ENCODE measurements at regions of chr1 and their contacts with region 1.

Region 1: DNA sequence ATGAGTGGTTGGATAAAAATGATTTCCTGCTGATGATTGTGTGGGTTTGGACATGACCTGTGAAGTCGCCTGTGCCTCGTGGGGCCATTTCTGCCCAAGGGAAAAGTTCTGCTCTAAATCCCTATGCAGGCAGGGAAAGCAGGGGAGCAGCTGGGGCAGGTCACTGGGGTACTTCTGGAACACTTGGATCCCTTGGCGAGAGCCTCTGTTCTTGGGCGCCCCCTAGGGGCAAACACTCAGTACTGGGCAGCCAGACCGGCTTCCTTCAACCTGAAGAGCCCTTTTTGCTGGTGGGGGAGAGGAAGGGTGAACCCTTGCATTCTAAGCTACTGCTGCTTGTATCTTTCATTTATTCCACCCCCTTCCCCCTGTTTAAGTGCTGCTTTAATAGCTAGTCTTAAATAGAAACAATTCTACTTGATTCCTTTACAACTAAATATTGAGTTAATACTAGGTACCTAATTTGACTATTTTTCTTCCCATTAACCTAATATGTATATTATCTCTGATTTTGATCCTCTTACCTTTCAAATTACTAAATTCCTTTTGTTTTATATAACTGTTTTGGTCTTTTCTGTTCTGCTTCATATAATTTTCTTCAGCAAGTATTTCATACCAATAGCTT is 5.1 kb upstream of the CLEC20A start:
- DNase-seq: peak; percentile 56 to 96
- H3K4me3 ChIP-seq: no peak overlapping the region
- H3K27ac ChIP-seq: no peak overlapping the region
- H3K4me1 ChIP-seq: no peaks in the 10 kb centered on the region; a peak in 1 of 7 replicates
- H3K27me3 ChIP-seq: no peaks in the 10 kb centered on the region
- CTCF ChIP-seq: peak; percentile 84 to 95 (median 87)
- EP300 ChIP-seq: no peak
- POLR2A ChIP-seq: no peak
- RAD21 ChIP-seq: peak; percentile 70 to 79

Region 2: GRCh38 chr1:178282949-178283367 is 218.9 kb before region 1 on chr1:
- CTCF ChIA-PET with region 1: interaction called, 12 read pairs
- POLR2A ChIA-PET with region 1: no interaction called
- DNase-seq: no peak
- H3K4me3 ChIP-seq: peak overlapping the region in 1 of 4 experiments; percentile 53; a peak in 2 of 8 replicates
- H3K27ac ChIP-seq: peak overlapping the region; percentile 58
- H3K4me1 ChIP-seq: peaks cover 9 to 23% (median 12%) of the 10 kb centered on the region in 4 experiments; a peak in 6 of 7 replicates
- H3K27me3 ChIP-seq: no peaks in the 10 kb centered on the region
- CTCF ChIP-seq: peak in 2 of 3 experiments; percentile 35 to 41; a peak in 2 of 4 replicates
- EP300 ChIP-seq: no peak
- POLR2A ChIP-seq: no peak
- RAD21 ChIP-seq: peak; percentile 54 to 56

Region 3: GRCh38 chr1:178330153-178330552 is 171.7 kb before region 1 on chr1:
- CTCF ChIA-PET with region 1: interaction called, 12 read pairs
- POLR2A ChIA-PET with region 1: no interaction called
- DNase-seq: no peak
- H3K4me3 ChIP-seq: no peak overlapping the region
- H3K27ac ChIP-seq: no peak overlapping the region
- H3K4me1 ChIP-seq: no peaks in the 10 kb centered on the region
- H3K27me3 ChIP-seq: no peaks in the 10 kb centered on the region; a peak in 1 of 7 replicates
- CTCF ChIP-seq: no peak
- EP300 ChIP-seq: no peak
- POLR2A ChIP-seq: no peak
- RAD21 ChIP-seq: no peak

Region 4: GRCh38 chr1:178379807-178380206 is 122.0 kb before region 1 on chr1:
- CTCF ChIA-PET with region 1: interaction called, 16 read pairs
- POLR2A ChIA-PET with region 1: no interaction called
- DNase-seq: peak in 1 of 2 experiments; percentile 91
- H3K4me3 ChIP-seq: no peak overlapping the region
- H3K27ac ChIP-seq: no peak overlapping the region
- H3K4me1 ChIP-seq: peaks cover 0 to 3% (median 0%) of the 10 kb centered on the region in 4 experiments; a peak in 1 of 7 replicates
- H3K27me3 ChIP-seq: no peaks in the 10 kb centered on the region
- CTCF ChIP-seq: peak; percentile 77 to 92 (median 78)
- EP300 ChIP-seq: no peak
- POLR2A ChIP-seq: no peak
- RAD21 ChIP-seq: peak; percentile 53 to 66

Region 5: DNA sequence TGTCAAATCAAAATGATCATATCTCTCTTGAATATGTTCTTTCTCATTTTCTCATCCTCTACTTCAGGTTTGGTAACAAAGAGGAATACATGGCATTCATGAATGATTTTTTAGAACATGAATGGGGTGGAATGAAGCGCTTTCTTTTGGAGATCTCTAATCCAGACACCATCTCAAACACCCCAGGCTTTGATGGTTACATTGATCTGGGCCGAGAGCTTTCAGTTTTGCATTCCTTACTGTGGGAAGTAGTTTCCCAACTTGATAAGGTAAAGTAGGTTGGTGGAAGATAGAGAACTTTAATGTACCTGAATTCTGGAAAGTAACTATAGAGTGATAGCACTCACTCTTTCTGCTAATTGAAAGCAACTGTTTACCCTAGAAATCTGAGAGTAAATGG is 47.4 kb before region 1 on chr1:
- CTCF ChIA-PET with region 1: interaction called, 11 read pairs
- POLR2A ChIA-PET with region 1: no interaction called
- DNase-seq: no peak
- H3K4me3 ChIP-seq: no peak overlapping the region
- H3K27ac ChIP-seq: no peak overlapping the region
- H3K4me1 ChIP-seq: no peaks in the 10 kb centered on the region; a peak in 1 of 7 replicates
- H3K27me3 ChIP-seq: no peaks in the 10 kb centered on the region
- CTCF ChIP-seq: no peak
- EP300 ChIP-seq: no peak
- POLR2A ChIP-seq: no peak
- RAD21 ChIP-seq: no peak

Region 6: DNA sequence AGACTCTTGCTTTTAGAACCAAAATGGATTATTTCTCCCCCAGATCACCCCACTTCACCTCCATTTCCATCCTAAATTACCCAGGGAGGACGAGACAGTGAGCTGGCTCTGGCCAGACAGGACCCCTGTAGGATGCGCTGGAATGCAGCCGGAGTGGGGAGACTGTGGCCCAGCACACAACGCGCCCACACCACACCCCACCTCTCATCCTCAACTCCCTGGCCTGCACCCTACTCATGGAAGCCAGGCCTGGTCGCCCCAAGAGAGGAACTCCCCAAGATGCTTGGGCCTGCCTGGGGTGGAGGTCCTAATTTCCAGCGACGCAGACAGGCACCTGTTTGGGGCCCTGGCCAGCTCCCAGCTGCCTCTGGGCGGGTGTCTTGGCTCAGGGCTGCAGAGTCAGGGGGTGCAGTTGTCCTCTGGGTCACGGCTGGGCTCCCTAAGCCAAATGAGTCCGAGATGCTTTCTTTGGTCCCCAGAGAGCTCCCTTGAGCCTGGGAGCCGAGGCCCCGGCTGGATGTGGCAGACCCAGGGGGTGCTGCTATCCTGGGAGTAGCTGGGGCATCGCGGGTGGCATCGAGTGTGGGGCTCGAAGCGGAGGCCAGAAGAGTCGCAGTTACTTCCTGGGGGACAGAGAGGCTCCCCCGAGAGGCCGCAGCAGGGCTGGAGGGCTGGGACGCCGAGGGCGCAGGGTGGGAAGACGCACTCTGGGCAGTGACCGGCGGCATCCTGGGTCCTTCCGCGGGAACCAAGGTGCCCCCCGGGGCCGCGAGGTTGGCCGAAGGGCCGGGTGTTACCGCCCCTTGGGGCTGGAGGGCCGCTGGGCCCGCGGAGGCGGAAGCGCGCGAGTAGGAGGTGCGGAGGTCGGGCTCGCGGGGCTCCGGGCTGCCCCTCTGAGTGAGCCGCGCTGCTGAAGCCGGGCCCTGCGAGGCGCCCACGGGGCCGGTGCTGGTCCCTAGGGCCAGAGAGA is 15.4 kb before region 1 on chr1:
- CTCF ChIA-PET with region 1: interaction called, 100 read pairs
- POLR2A ChIA-PET with region 1: no interaction called
- DNase-seq: peak in 1 of 2 experiments; percentile 54
- H3K4me3 ChIP-seq: peak overlapping the region in 1 of 4 experiments; percentile 33; a peak in 3 of 8 replicates
- H3K27ac ChIP-seq: no peak overlapping the region
- H3K4me1 ChIP-seq: no peaks in the 10 kb centered on the region; a peak in 1 of 7 replicates
- H3K27me3 ChIP-seq: no peaks in the 10 kb centered on the region
- CTCF ChIP-seq: no peak
- EP300 ChIP-seq: no peak
- POLR2A ChIP-seq: no peak
- RAD21 ChIP-seq: no peak